BJ (cell line): ENCODE measurements at regions of chr11 and their contacts with region 1.

Region 1: GRCh38 chr11:125923012-125923579 is 18.8 kb downstream of the DDX25 start:
- DNase-seq: peak; percentile 9
- H3K4me3 ChIP-seq: no peak overlapping the region
- H3K27me3 ChIP-seq: peaks cover 10% of the 10 kb centered on the region
- CTCF ChIP-seq: peak; percentile 89

Region 2: GRCh38 chr11:125675196-125675595 is 247.9 kb before region 1 on chr11:
- CTCF ChIA-PET with region 1: no interaction called
- POLR2A ChIA-PET with region 1: no interaction called
- DNase-seq: no peak
- H3K4me3 ChIP-seq: no peak overlapping the region
- H3K27me3 ChIP-seq: no peaks in the 10 kb centered on the region
- CTCF ChIP-seq: no peak

Region 3: GRCh38 chr11:125941619-125942611 is 18.8 kb after region 1 on chr11:
- CTCF ChIA-PET with region 1: interaction called, 11 read pairs
- POLR2A ChIA-PET with region 1: no interaction called
- DNase-seq: no peak
- H3K4me3 ChIP-seq: no peak overlapping the region
- H3K27me3 ChIP-seq: peaks cover 1% of the 10 kb centered on the region
- CTCF ChIP-seq: peak; percentile 78